ENCODE measurements at regions of chr1 and their contacts with region 1.

Region 1: GRCh38 chr1:161389691-161390558 is 22.2 kb upstream of the CFAP126 start:
- DNase-seq: peak; percentile 98
- H3K4me3 ChIP-seq: peak overlapping the region; percentile 62 to 77
- H3K27ac ChIP-seq: peak overlapping the region; percentile 93 to 94
- H3K4me1 ChIP-seq: peaks cover 5% of the 10 kb centered on the region
- H3K27me3 ChIP-seq: no peaks in the 10 kb centered on the region
- CTCF ChIP-seq: no peak
- POLR2A ChIP-seq: peak; percentile 90

Region 2: DNA sequence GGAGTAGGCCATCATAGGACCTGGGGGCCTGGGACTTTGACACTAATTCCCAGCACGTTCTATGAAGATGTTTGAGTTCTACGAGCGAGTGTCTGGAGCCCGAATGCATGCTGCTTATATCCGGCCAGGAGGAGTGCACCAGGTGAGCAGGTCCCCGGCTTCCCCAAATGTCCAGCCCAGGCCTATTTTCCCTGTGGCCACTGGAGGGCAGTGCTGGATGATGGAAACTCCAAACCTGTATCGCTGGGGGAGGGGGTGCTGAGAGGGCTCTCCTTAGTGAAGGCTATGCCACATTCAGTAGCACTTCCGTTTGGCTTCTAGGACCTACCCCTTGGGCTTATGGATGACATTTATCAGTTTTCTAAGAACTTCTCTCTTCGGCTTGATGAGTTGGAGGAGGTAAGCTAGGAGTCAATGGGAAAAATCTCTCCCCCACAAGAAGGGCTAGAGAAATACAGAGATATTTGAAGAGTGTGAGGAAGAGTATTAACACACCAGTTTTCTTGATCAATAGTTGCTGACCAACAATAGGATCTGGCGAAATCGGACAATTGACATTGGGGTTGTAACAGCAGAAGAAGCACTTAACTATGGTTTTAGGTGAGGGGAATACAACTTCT is 180.0 kb before region 1 on chr1:
- intact Hi-C with region 1: loop called (anchors 10 kb)
- DNase-seq: peak; percentile 80
- H3K4me3 ChIP-seq: no peak overlapping the region
- H3K27ac ChIP-seq: no peak overlapping the region
- H3K4me1 ChIP-seq: no peaks in the 10 kb centered on the region
- H3K27me3 ChIP-seq: no peaks in the 10 kb centered on the region
- CTCF ChIP-seq: peak; percentile 61 to 83 (median 82)
- POLR2A ChIP-seq: no peak